Mammary epithelial cell (primary cell): ENCODE measurements at regions of chr2 and their contacts with region 1.

Region 1: DNA sequence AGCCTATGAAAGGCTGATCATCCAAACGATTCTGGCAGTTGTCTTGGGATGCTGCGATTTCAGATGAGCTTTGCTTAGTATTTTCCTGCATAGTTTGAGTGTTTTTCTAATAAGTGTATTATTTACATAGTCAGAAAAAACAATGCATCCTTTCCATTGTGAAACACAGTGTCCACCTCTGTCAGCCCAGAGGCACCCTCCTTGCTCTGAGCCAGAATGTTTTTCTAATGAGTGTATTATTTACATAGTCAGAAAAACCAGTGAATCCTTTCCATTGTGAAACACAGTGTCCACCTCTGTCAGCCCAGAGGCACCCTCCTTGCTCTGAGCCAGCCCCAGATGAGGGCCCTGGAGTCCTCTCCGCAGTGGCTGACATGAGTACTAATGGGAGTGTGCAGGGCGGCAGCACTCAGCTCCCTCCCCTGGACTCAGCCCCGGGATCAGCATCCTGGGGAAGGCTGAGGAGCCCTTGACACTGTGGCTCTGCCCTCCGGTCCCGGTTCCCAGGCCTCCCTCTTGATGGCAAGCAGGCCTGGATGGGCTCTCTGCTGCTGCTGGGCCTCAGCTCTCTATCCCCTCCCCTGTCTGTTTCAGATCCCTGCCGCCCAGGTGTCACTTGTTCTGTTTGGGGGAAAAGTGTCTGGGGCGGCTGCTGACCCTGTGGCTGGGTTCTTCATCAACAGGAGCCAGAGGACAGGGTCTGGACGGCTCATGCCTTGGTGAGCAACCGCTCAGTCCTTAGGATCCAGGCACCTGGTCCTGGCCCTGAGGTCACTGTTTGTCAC is 5.9 kb downstream of the MFSD2B start:
- DNase-seq: peak; percentile 87
- H3K4me3 ChIP-seq: no peak overlapping the region
- H3K27ac ChIP-seq: peak overlapping the region; percentile 21
- H3K4me1 ChIP-seq: peaks cover 25% of the 10 kb centered on the region
- H3K27me3 ChIP-seq: no peaks in the 10 kb centered on the region
- CTCF ChIP-seq: no peak

Region 2: DNA sequence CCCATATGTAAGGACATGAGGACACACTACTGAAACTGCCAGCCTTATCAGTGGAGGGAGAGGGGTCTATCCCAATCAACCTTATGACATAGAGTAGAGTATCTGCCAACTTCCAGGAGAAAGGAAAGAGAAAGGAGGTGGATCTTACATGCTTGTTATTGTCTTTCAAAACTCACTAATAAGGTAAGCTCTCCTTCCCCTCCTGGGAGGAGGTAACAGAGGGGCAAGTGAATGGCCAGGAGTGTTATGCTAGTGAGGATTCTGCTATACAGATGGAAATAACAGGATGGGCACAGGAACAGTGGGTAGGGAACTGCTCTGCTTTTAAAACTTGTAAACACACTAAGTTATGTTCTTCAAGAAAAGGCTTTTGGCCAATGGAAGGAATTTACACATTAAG is 1871.9 kb before region 1 on chr2:
- CTCF ChIA-PET with region 1: no interaction called
- dilution Hi-C with region 1: no loop called
- in situ Hi-C with region 1: no loop called
- intact Hi-C with region 1: no loop called
- DNase-seq: no peak
- H3K4me3 ChIP-seq: no peak overlapping the region
- H3K27ac ChIP-seq: no peak overlapping the region
- H3K4me1 ChIP-seq: no peaks in the 10 kb centered on the region
- H3K27me3 ChIP-seq: no peaks in the 10 kb centered on the region
- CTCF ChIP-seq: no peak

Region 3: GRCh38 chr2:24046930-24047702 is 31.4 kb after region 1 on chr2 and contains the start of gene WDCP:
- CTCF ChIA-PET with region 1: no interaction called
- dilution Hi-C with region 1: no loop called
- in situ Hi-C with region 1: no loop called
- intact Hi-C with region 1: loop called (anchors 2 kb)
- DNase-seq: peak; percentile 98
- H3K4me3 ChIP-seq: peak within 1 kb of the TSS; percentile 62 to 72 (median 62)
- H3K27ac ChIP-seq: peak within 1 kb of the TSS; percentile 17
- H3K4me1 ChIP-seq: peaks cover 8% of the 10 kb centered on the region
- H3K27me3 ChIP-seq: no peaks in the 10 kb centered on the region
- CTCF ChIP-seq: no peak
- total RNA-seq, gene WDCP: 9.0 to 10.1 TPM